Activated CD8-positive, alpha-beta T cell treated with anti-CD3 and anti-CD28 coated beads, Interleukin-2, amount 10 ng/mL, durations not matched to agents 7 days and 5 days (primary cell): ENCODE measurements at regions of chr15 and their contacts with region 1.

Region 1: GRCh38 chr15:85554852-85555521 is 174.6 kb downstream of the AKAP13 start:
- DNase-seq: no peak
- ATAC-seq: no peak
- H3K4me3 Mint-ChIP-seq: no peak overlapping the region
- H3K27ac Mint-ChIP-seq: no peak overlapping the region
- H3K4me1 Mint-ChIP-seq: peaks cover 50% of the 10 kb centered on the region
- H3K27me3 Mint-ChIP-seq: no peaks in the 10 kb centered on the region

Region 2: DNA sequence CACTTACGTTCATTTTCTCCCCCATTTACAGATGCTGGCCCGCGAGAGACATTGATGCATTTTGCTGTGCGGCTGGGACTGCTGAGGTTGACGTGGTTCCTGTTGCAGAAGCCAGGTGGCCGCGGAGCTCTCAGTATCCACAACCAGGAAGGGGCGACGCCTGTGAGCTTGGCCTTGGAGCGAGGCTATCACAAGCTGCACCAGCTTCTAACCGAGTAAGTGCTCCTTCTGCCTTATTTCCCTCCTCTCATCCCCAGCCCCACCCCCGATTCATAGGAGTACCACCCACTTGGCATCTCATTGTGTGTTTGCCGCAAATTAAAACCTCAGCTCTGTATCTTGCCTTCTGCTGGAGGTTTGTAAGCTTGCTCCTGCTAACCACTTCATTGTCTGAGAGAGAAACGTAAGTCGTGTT is 11.2 kb before region 1 on chr15:
- CTCF ChIA-PET with region 1: interaction called, 79 read pairs
- POLR2A ChIA-PET with region 1: interaction called, 7 read pairs
- DNase-seq: peak; percentile 76
- ATAC-seq: peak; percentile 86
- H3K4me3 Mint-ChIP-seq: peak overlapping the region; percentile 64
- H3K27ac Mint-ChIP-seq: peak overlapping the region; percentile 78
- H3K4me1 Mint-ChIP-seq: peaks cover 74% of the 10 kb centered on the region
- H3K27me3 Mint-ChIP-seq: no peaks in the 10 kb centered on the region

Region 3: GRCh38 chr15:85570336-85570735 is 15.3 kb after region 1 on chr15:
- CTCF ChIA-PET with region 1: no interaction called
- POLR2A ChIA-PET with region 1: no interaction called
- DNase-seq: no peak
- ATAC-seq: no peak
- H3K4me3 Mint-ChIP-seq: no peak overlapping the region
- H3K27ac Mint-ChIP-seq: no peak overlapping the region
- H3K4me1 Mint-ChIP-seq: no peaks in the 10 kb centered on the region
- H3K27me3 Mint-ChIP-seq: no peaks in the 10 kb centered on the region